Aorta (tissue), 5 donors: ENCODE measurements at regions of chr18 and their contacts with region 1.

Region 1: GRCh38 chr18:67104700-67105284 is 411.7 kb downstream of the DSEL start:
- DNase-seq: peak; percentile 46 to 74
- ATAC-seq: no peak
- H3K4me3 ChIP-seq: no peak overlapping the region
- H3K27ac ChIP-seq: no peak overlapping the region
- H3K4me1 ChIP-seq: no peaks in the 10 kb centered on the region
- H3K27me3 ChIP-seq: no peaks in the 10 kb centered on the region

Region 2: DNA sequence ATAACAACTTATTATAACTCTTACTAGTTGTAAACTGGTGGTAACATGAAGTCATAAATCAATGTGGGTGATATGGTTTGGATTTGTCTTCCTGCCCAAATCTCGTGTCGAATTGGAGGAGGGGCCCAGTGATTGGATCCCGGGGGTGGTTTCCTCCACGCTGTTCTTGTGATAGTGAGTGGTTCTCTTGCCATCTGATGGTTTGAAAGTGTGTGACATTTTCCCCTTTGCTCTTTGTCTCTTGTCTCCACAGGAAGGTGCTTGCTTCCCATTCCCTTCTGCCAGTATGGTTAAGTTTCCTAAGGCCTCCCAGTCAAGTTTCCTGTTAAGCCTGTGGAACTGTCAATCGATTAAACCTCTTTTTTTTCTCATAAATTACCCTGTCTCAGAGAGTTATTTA is 90.1 kb after region 1 on chr18:
- intact Hi-C with region 1: loop called (anchors 2 to 5 kb)
- DNase-seq: no peak
- ATAC-seq: no peak
- H3K4me3 ChIP-seq: no peak overlapping the region
- H3K27ac ChIP-seq: no peak overlapping the region
- H3K4me1 ChIP-seq: no peaks in the 10 kb centered on the region
- H3K27me3 ChIP-seq: no peaks in the 10 kb centered on the region

Region 3: DNA sequence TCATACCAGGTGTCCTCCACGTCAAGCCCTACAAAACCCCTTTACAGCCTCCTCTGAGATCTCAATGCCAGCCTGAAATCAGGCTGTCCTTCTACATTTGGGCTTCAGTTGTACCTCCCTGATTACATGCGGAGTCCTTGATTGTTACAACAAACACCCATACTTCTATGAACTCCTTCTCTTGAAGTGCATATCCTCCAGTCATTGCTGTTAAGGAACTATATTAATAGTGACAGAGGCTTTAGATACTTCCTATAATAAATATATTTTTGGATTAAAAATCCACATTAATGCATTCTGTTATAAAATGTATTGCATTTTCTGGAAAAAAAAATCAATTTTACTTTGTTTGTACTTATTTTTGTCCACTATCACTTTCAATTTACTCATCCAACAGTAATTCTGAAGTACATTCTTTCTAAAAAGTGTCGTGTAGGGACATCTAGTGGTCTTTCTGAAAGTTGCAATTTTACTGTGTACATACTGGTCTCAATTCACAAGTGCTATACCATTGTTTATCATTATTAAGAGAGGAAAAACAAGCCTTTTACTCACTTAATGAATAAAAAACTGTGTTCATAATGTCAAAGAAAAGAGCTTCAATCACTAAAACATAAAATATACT is 95.3 kb after region 1 on chr18:
- intact Hi-C with region 1: loop called (anchors 5 kb)
- DNase-seq: no peak
- ATAC-seq: no peak
- H3K4me3 ChIP-seq: no peak overlapping the region
- H3K27ac ChIP-seq: no peak overlapping the region
- H3K4me1 ChIP-seq: no peaks in the 10 kb centered on the region
- H3K27me3 ChIP-seq: no peaks in the 10 kb centered on the region